ENCODE measurements at regions of chr12 and their contacts with region 1.

Region 1: GRCh38 chr12:31959161-31959700 is at the start of gene RESF1:
- DNase-seq: peak; percentile 85
- H3K4me3 Mint-ChIP-seq: peak within 1 kb of the TSS; percentile 84
- H3K27ac Mint-ChIP-seq: peak within 1 kb of the TSS; percentile 16
- H3K4me1 Mint-ChIP-seq: peaks cover 17% of the 10 kb centered on the region
- H3K27me3 Mint-ChIP-seq: no peaks in the 10 kb centered on the region
- CTCF ChIP-seq: no peak
- total RNA-seq, gene RESF1: 14.7 and 18.7 TPM in 2 replicates

Region 2: GRCh38 chr12:31647086-31647491 is 312.1 kb before region 1 on chr12:
- CTCF ChIA-PET with region 1: no interaction called
- POLR2A ChIA-PET with region 1: interaction called, 16 read pairs
- intact Hi-C with region 1: no loop called
- DNase-seq: peak; percentile 49
- H3K4me3 Mint-ChIP-seq: no peak overlapping the region
- H3K27ac Mint-ChIP-seq: peak overlapping the region; percentile 28
- H3K4me1 Mint-ChIP-seq: peaks cover 10% of the 10 kb centered on the region
- H3K27me3 Mint-ChIP-seq: no peaks in the 10 kb centered on the region
- CTCF ChIP-seq: no peak

Region 3: DNA sequence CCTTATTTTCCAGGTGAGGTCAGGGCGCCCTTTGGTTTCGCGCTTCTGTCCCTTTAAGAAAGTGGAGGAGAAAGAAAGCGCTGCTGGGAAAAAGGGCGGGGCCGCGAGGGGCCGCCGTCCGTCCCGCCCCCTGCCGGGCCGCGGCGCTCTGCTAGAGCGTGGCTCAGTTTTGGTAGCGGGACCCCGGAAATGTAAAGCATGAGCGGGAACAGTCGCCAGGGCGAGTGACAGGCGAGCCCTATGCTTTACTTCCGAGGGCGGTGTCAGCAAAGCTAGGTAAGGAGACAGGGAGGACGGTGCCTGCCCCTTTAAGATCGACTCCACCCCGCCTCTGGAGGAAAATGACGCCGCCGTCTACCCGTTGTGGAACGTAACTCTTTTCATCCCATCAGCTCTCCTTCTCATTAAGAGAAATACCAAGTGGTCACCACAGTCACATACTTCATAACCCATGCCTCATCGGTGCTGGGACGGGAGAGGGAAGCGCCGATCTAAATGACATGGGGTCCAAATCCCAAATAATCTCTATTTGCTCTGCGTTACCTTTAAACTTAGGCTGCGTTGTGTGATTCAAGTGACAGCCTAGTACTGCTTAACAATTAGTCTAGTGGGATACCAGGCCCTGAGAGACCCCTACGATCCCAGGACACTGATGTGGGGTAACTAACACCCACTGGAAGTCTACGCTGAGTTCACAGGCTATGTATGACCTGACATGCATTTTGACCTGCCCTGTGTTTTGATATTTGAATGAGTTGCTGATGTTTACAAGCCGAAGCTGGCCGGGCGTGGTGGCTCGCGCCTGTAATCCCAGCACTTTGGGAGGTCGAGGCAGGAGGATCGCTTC is 299.9 kb before region 1 on chr12 and contains the start of gene ETFBKMT:
- CTCF ChIA-PET with region 1: no interaction called
- POLR2A ChIA-PET with region 1: interaction called, 24 read pairs
- intact Hi-C with region 1: no loop called
- DNase-seq: peak; percentile 96
- H3K4me3 Mint-ChIP-seq: peak within 1 kb of the TSS; percentile 93
- H3K27ac Mint-ChIP-seq: peak within 1 kb of the TSS; percentile 94
- H3K4me1 Mint-ChIP-seq: peaks cover 3% of the 10 kb centered on the region
- H3K27me3 Mint-ChIP-seq: no peaks in the 10 kb centered on the region
- CTCF ChIP-seq: no peak
- total RNA-seq, gene ETFBKMT: 3.0 and 3.3 TPM in 2 replicates

Region 4: DNA sequence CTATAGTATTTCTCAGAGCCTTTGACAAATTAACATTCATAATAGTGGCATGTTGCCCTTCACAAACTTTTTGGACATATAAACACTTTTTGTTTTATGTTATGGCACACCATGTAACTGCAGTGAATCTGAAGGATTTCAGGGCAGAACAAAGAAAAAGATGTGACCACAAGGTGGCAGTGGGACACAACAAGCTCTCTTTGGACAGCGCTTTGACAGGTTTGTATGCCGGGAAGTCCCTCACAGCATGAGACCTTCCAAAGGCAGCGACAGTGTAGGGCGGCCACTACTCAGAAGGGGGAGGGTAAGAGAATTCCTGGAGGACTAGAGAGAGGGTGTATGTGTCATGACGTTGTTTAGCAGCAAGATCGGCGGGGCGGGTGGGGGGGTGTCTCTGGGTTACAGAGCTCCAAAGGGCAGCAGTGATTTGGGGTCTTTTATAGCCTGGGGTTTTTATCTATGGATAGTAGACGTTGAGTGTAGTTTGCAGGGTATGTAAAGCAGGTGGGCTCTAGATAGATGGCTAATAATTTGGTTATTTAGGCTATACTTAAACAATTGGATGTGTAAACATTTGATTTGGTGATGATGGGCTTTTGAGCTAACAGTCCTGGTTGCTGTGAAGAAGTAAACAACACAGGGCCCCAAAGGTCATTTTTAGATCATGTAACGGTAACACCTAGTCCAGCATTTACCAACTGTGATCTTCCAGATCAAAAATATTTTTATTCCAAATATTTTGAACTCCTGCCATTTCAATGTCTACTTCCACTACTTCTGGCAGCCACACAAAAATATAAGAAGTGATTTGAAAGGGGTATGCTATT is 276.9 kb before region 1 on chr12:
- CTCF ChIA-PET with region 1: interaction called, 4 read pairs
- POLR2A ChIA-PET with region 1: interaction called, 3 read pairs
- intact Hi-C with region 1: loop called (anchors 2 kb)
- DNase-seq: peak; percentile 88
- H3K4me3 Mint-ChIP-seq: no peak overlapping the region
- H3K27ac Mint-ChIP-seq: no peak overlapping the region
- H3K4me1 Mint-ChIP-seq: no peaks in the 10 kb centered on the region
- H3K27me3 Mint-ChIP-seq: no peaks in the 10 kb centered on the region
- CTCF ChIP-seq: peak; percentile 82

Region 5: GRCh38 chr12:31728917-31729640 is 230.2 kb before region 1 on chr12 and contains the start of gene AMN1:
- CTCF ChIA-PET with region 1: no interaction called
- POLR2A ChIA-PET with region 1: interaction called, 13 read pairs
- intact Hi-C with region 1: loop called (anchors 1 kb)
- DNase-seq: peak; percentile 94
- H3K4me3 Mint-ChIP-seq: peak within 1 kb of the TSS; percentile 84
- H3K27ac Mint-ChIP-seq: peak within 1 kb of the TSS; percentile 76
- H3K4me1 Mint-ChIP-seq: peaks cover 14% of the 10 kb centered on the region
- H3K27me3 Mint-ChIP-seq: no peaks in the 10 kb centered on the region
- CTCF ChIP-seq: no peak
- total RNA-seq, gene AMN1: 3.0 and 5.6 TPM in 2 replicates

Region 6: GRCh38 chr12:31989571-31990362 is 30.5 kb after region 1 on chr12:
- CTCF ChIA-PET with region 1: interaction called, 6 read pairs
- POLR2A ChIA-PET with region 1: interaction called, 12 read pairs
- intact Hi-C with region 1: no loop called
- DNase-seq: peak; percentile 51
- H3K4me3 Mint-ChIP-seq: peak overlapping the region; percentile 7
- H3K27ac Mint-ChIP-seq: peak overlapping the region; percentile 46
- H3K4me1 Mint-ChIP-seq: peaks cover 10% of the 10 kb centered on the region
- H3K27me3 Mint-ChIP-seq: no peaks in the 10 kb centered on the region
- CTCF ChIP-seq: no peak

Region 7: DNA sequence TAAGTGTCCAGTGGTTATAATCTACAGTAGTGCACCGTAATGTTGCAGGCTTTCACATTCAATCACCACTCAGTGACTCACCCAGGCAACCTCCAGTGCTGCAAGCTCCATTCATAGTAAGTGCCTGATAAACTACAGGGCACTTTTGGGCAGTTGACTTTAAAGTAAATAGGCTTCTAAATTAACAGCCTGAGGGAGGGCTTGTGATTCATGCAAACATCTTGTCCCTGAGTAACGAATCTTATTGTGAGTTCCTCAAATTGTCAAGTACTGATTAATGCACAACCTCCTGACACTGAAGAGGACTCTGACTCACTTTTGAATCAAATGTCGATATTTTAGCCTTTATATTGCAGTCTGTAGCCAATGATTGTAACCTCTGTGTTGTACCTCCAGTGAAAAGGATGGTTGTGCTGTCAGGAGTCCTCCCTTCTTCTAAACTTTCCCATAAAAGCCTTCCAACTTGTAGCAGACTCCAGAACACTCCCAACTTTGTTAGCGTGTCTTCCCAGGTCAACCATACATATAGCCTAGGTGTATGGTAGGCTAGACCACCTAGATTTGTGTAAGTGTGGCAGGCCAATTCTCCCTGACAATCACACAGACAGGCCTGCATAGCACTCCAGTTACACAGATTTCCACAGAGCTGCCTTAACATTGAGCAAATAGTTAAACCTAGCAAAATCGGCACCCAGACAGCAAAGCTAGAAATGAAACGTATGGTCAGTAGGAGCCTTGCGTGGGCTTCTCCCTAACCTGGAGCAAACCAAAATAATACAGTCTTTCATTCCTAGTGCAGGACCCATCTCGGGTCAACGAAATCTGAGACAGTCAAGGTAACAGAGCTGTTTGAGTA is 92.6 kb after region 1 on chr12:
- CTCF ChIA-PET with region 1: interaction called, 3 read pairs
- POLR2A ChIA-PET with region 1: interaction called, 5 read pairs
- intact Hi-C with region 1: loop called (anchors 2 kb)
- DNase-seq: peak; percentile 92
- H3K4me3 Mint-ChIP-seq: no peak overlapping the region
- H3K27ac Mint-ChIP-seq: peak overlapping the region; percentile 47
- H3K4me1 Mint-ChIP-seq: peaks cover 7% of the 10 kb centered on the region
- H3K27me3 Mint-ChIP-seq: no peaks in the 10 kb centered on the region
- CTCF ChIP-seq: no peak

Measured in MCF 10A (cell line).